ENCODE measurements at regions of chr10 and their contacts with region 1.

Region 1: DNA sequence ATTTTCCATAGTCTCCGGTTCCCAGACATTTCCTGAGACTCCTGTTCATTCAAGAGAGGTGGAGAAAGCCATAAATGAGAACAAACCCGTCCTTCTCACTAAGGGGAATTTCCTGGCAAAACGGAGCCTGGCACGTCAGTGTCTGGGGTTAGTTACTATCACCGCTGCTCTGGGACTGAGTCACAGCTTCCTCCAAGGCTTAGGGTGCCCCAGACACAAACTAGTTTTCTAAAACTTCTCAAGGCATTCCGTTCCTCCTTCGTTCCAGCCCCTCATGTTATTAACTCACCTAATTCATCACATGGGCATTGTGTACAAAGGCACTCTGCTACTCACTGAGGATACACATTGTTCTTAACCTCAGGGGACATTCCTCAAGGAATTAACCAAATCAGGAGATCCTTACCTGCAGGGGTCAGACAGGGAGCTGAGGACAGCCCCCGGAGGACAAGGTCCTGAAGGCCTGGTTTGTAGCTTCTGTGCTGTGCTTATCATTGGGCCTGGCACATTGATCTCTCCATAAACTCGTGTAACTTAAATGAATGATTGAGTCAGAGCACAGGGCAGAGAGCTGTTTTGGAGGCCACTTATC is 103.0 kb upstream of the KLF6 start:
- DNase-seq: peak; percentile 97
- H3K4me3 ChIP-seq: peak overlapping the region in 1 of 3 experiments; percentile 22
- H3K27ac ChIP-seq: peak overlapping the region; percentile 100
- H3K4me1 ChIP-seq: peaks cover 56% of the 10 kb centered on the region
- H3K27me3 ChIP-seq: no peaks in the 10 kb centered on the region
- CTCF ChIP-seq: no peak
- POLR2A ChIP-seq: peak; percentile 65

Region 2: GRCh38 chr10:3805791-3806461 is 82.1 kb before region 1 on chr10:
- CTCF ChIA-PET with region 1: interaction called, 3 read pairs
- POLR2A ChIA-PET with region 1: interaction called, 4 read pairs
- dilution Hi-C with region 1: no loop called
- intact Hi-C with region 1: loop called (anchors 1 kb)
- DNase-seq: peak; percentile 96
- H3K4me3 ChIP-seq: peak overlapping the region in 1 of 3 experiments; percentile 31
- H3K27ac ChIP-seq: peak overlapping the region; percentile 100
- H3K4me1 ChIP-seq: peaks cover 70% of the 10 kb centered on the region
- H3K27me3 ChIP-seq: no peaks in the 10 kb centered on the region
- CTCF ChIP-seq: no peak
- POLR2A ChIP-seq: peak; percentile 29

Region 3: GRCh38 chr10:3852147-3852904 is 35.7 kb before region 1 on chr10:
- CTCF ChIA-PET with region 1: interaction called, 3 read pairs
- POLR2A ChIA-PET with region 1: interaction called, 4 read pairs
- dilution Hi-C with region 1: no loop called
- intact Hi-C with region 1: loop called (anchors 1 kb)
- DNase-seq: peak; percentile 98
- H3K4me3 ChIP-seq: no peak overlapping the region
- H3K27ac ChIP-seq: peak overlapping the region; percentile 93
- H3K4me1 ChIP-seq: peaks cover 23% of the 10 kb centered on the region
- H3K27me3 ChIP-seq: no peaks in the 10 kb centered on the region
- CTCF ChIP-seq: no peak
- POLR2A ChIP-seq: no peak

Region 4: DNA sequence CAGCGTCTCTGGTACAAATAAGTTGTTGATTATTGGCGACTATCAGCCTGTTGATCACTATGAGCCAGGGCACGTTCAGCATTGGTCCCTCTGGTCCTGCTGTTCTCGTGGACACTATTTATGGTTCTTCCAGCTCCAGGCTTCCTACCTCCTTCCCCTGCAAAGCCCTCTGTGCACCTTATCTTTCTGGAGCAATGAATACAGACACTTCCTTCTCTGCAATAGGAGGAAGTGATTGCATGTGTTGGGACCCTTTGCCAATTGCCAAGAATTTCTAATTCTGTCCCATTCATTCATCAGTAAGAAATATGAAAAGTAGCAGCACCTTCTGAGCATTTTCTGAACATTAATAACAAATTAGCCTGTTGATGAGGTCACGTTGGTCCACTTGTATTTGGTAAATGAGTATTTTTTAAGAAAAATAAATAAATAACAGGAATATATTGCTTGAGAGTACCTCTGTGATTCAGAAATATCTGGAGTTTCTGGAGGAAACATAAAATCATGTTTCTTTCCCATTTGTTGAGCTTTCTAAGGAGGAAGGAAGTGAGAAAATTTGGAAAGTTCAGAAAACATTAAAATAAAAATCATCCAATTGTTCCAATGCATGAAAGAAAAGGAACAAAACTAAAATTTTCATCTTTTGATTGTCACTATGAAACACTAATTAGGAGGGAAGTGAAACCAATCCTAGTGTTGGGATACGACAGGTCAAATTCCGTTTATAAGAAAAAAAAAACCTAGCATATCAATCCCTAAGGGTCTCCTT is 156.1 kb after region 1 on chr10:
- CTCF ChIA-PET with region 1: no interaction called
- POLR2A ChIA-PET with region 1: interaction called, 3 read pairs
- dilution Hi-C with region 1: no loop called
- intact Hi-C with region 1: loop called (anchors 1 kb)
- DNase-seq: peak; percentile 97
- H3K4me3 ChIP-seq: no peak overlapping the region
- H3K27ac ChIP-seq: peak overlapping the region; percentile 66
- H3K4me1 ChIP-seq: peaks cover 21% of the 10 kb centered on the region
- H3K27me3 ChIP-seq: no peaks in the 10 kb centered on the region
- CTCF ChIP-seq: no peak
- POLR2A ChIP-seq: peak; percentile 67

Region 5: DNA sequence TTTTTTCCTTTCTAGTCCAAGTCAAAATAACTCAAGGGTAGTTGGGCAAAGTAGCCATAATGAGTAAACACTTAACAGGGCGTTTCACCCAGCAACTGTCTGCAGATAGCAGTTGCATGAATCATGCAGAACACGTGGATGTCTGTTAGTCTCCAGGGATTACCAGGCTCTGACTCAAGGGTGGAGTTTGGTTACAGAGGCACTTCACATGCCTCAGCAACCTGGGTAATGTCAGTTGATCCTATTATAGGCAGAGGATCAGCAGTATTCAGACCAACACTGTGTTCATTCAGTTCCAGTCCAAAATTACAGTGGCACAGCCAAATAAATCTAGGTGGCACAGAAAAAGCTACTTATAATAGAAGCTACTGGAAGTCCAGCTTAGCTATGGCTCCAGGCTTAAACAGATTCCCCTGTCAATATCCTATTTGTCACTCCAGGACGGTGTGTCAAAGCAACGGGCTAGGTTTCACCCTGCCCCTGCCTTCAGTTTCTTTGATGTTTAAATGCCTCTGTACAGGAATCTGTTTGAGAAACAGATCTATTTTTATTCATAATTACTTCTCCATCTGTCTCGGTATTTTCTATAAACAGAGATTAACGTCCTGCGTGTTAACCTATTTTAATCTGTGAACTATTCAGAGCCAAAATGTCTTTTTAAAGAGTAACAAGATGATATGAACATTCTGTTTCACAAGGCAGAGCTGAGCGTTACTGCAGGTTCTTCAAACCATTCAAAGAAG is 775.4 kb after region 1 on chr10:
- CTCF ChIA-PET with region 1: no interaction called
- POLR2A ChIA-PET with region 1: no interaction called
- dilution Hi-C with region 1: no loop called
- intact Hi-C with region 1: loop called (anchors 2 kb)
- DNase-seq: peak; percentile 97
- H3K4me3 ChIP-seq: no peak overlapping the region
- H3K27ac ChIP-seq: peak overlapping the region; percentile 97
- H3K4me1 ChIP-seq: peaks cover 23% of the 10 kb centered on the region
- H3K27me3 ChIP-seq: no peaks in the 10 kb centered on the region
- CTCF ChIP-seq: no peak
- POLR2A ChIP-seq: peak; percentile 65

Measured in endothelial cell of umbilical vein (primary cell).